Endothelial cell of umbilical vein (primary cell): ENCODE measurements at regions of chr15 and their contacts with region 1.

Region 1: GRCh38 chr15:25433118-25433865 is 5.5 kb downstream of the UBE3A start:
- DNase-seq: no peak
- H3K4me3 ChIP-seq: no peak overlapping the region
- H3K27ac ChIP-seq: no peak overlapping the region
- H3K4me1 ChIP-seq: peaks cover 11% of the 10 kb centered on the region
- H3K27me3 ChIP-seq: no peaks in the 10 kb centered on the region
- CTCF ChIP-seq: no peak
- POLR2A ChIP-seq: no peak

Region 2: DNA sequence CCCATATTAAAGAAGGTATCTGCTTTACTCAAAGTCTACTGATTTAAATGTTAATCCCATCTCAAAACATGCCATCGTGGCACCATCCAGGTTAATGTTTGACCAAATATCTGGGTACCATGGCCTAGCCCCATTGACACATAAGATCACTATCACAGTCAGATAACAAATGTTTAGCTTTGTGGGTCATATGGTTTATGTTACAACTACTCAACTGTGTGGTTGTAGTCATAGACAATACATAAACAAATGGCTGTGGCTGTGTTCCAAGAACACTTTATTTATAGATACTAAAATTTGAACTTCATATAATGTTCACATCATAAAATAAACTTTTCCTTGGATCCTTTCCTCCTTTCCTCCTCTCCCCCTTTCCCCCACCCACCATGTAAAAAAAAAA is 488.3 kb before region 1 on chr15:
- CTCF ChIA-PET with region 1: no interaction called
- POLR2A ChIA-PET with region 1: no interaction called
- dilution Hi-C with region 1: no loop called
- intact Hi-C with region 1: no loop called
- DNase-seq: no peak
- H3K4me3 ChIP-seq: no peak overlapping the region
- H3K27ac ChIP-seq: no peak overlapping the region
- H3K4me1 ChIP-seq: peaks cover 2% of the 10 kb centered on the region
- H3K27me3 ChIP-seq: no peaks in the 10 kb centered on the region
- CTCF ChIP-seq: no peak
- POLR2A ChIP-seq: no peak

Region 3: GRCh38 chr15:25181293-25182097 is 251.8 kb before region 1 on chr15:
- CTCF ChIA-PET with region 1: no interaction called
- POLR2A ChIA-PET with region 1: no interaction called
- dilution Hi-C with region 1: no loop called
- intact Hi-C with region 1: no loop called
- DNase-seq: no peak
- H3K4me3 ChIP-seq: no peak overlapping the region
- H3K27ac ChIP-seq: no peak overlapping the region
- H3K4me1 ChIP-seq: no peaks in the 10 kb centered on the region
- H3K27me3 ChIP-seq: no peaks in the 10 kb centered on the region
- CTCF ChIP-seq: no peak
- POLR2A ChIP-seq: no peak

Region 4: DNA sequence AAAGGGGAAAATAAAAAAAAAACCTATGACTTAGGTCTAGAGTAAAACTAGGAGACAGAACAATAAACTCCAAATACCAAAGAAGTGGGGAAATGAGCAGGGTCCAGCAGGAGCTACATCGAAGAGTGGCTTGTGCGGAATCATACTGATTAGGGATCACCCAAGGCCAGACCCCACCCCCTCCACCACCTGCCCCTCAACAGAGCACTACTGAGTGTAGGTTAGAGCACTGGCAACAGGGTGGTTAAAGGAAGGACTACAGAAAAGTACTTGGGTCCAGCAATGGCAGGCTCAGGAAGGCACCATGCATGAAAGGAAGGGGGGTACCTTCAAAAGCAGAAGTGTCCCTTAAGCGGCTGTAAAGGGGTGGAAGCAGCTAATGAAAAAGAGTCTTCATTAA is 90.7 kb before region 1 on chr15:
- CTCF ChIA-PET with region 1: no interaction called
- POLR2A ChIA-PET with region 1: no interaction called
- dilution Hi-C with region 1: no loop called
- intact Hi-C with region 1: loop called (anchors 5 kb)
- DNase-seq: no peak
- H3K4me3 ChIP-seq: no peak overlapping the region
- H3K27ac ChIP-seq: no peak overlapping the region
- H3K4me1 ChIP-seq: no peaks in the 10 kb centered on the region
- H3K27me3 ChIP-seq: no peaks in the 10 kb centered on the region
- CTCF ChIP-seq: no peak
- POLR2A ChIP-seq: no peak

Region 5: GRCh38 chr15:25391971-25392721 is 41.1 kb before region 1 on chr15:
- CTCF ChIA-PET with region 1: no interaction called
- POLR2A ChIA-PET with region 1: no interaction called
- dilution Hi-C with region 1: no loop called
- intact Hi-C with region 1: no loop called
- DNase-seq: no peak
- H3K4me3 ChIP-seq: no peak overlapping the region
- H3K27ac ChIP-seq: no peak overlapping the region
- H3K4me1 ChIP-seq: peaks cover 18% of the 10 kb centered on the region
- H3K27me3 ChIP-seq: no peaks in the 10 kb centered on the region
- CTCF ChIP-seq: no peak
- POLR2A ChIP-seq: no peak